ENCODE measurements at regions of chr1 and their contacts with region 1.

Region 1: GRCh38 chr1:30385216-30385995 is 338.0 kb downstream of the MATN1 start:
- DNase-seq: peak; percentile 51

Region 2: GRCh38 chr1:30024411-30025195 is 360.8 kb before region 1 on chr1:
- intact Hi-C with region 1: loop called in 1 of 2 experiments (anchors 2 kb)
- DNase-seq: no peak

Measured in posterior vena cava (tissue), 2 donors.